Left ventricle myocardium superior (tissue), 1 donor: ENCODE measurements at regions of chr12 and their contacts with region 1.

Region 1: DNA sequence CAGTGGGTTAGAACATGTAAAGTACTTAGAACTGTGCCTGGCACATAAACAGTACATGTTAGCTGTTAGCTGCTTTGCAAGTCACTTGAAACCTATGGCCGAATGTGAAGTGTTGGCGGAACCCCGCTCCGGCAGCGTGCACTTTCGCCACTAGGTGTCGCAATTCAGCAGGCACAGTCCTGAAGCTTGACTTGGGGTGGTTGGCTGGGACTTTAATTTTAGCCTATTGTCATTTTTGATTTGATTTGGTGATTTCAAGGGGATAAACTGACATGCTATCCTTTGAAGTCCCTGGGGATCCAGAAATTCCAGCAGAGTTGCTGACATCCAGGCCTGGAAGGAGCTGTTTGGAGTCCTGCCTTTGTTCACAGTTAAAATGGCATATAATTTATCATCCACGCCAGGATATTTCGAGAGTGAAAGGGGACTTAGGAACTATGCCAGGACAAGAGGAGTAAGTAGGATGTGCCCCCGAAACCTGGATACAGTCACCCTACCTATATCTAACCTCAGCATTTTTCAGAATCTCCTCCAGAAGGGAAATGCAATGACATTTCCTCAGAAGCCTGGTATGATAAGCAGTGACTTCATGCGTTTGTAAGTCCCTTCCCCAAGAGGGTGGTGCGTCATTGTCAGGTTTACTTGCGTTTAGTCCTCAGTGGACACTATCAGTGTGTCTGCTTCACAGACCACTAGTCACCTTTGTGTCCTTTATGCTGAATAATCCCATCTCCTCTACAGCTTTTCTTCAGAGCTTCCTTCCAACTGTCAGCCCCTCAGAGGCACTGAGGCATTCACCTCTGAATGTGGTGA is 3.5 kb upstream of the TSPAN9 start:
- DNase-seq: peak; percentile 89
- ATAC-seq: peak; percentile 24

Region 2: GRCh38 chr12:3122835-3123678 is 49.4 kb after region 1 on chr12:
- intact Hi-C with region 1: loop called (anchors 10 kb)
- DNase-seq: peak; percentile 63
- ATAC-seq: peak; percentile 52